ENCODE measurements at regions of chr1 and their contacts with region 1.

Region 1: GRCh38 chr1:222370081-222370912 is 177.6 kb downstream of the HHIPL2 start:
- DNase-seq: peak; percentile 97
- ATAC-seq: peak; percentile 56
- H3K4me3 ChIP-seq: no peak overlapping the region
- H3K27ac ChIP-seq: peak overlapping the region; percentile 99
- H3K4me1 ChIP-seq: peaks cover 30% of the 10 kb centered on the region
- H3K27me3 ChIP-seq: no peaks in the 10 kb centered on the region
- CTCF ChIP-seq: no peak
- POLR2A ChIP-seq: no peak
- RAD21 ChIP-seq: no peak; the same call in 1 of the 2 replicates

Region 2: DNA sequence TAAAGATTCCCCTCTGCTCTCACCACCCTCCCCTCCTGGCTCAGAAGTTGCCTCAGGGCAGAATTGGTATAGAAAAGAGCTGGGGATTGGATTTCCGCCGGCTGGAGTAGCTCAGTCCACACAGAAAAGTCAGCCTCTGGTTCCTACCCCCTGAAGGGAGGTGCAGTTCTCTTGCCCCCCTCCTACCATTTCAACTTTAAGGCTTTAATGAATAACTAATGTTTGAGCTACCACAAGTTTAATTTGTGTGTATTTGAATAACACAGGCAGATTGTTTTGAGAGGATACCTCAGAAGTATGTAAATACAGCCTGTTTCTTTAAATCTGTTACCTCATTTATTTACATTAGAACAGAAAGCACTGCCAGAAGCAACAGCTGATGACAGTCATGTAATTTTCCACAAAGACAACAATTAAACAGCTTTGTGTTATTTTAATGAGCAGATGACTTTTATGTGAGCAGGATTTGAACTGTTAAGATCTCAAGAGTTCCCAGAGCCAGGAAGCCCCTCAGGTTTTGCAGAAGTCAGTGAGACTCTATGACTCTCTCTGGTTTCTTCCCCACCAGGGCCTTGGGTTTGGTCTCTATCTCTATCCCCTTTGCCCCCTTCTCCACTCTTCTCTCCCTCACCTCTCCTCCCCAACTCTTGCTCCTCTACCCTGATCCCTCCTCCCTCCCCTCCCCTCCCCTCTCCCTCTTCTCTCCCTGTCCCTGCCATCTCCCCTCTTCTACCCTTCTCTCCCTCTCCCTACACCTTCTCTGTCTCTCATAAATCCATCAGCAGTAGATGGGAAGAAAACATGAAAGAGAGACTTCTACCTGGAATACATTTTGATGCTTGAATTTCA is 654.8 kb before region 1 on chr1:
- CTCF ChIA-PET with region 1: no interaction called
- POLR2A ChIA-PET with region 1: no interaction called
- dilution Hi-C with region 1: no loop called
- in situ Hi-C with region 1: no loop called
- intact Hi-C with region 1: loop called (anchors 5 kb)
- DNase-seq: peak; percentile 77
- ATAC-seq: peak; percentile 28
- H3K4me3 ChIP-seq: no peak overlapping the region
- H3K27ac ChIP-seq: peak overlapping the region; percentile 90
- H3K4me1 ChIP-seq: peaks cover 57% of the 10 kb centered on the region
- H3K27me3 ChIP-seq: no peaks in the 10 kb centered on the region
- CTCF ChIP-seq: no peak
- POLR2A ChIP-seq: no peak
- RAD21 ChIP-seq: no peak

Region 3: GRCh38 chr1:222073307-222073995 is 296.8 kb before region 1 on chr1:
- CTCF ChIA-PET with region 1: no interaction called
- POLR2A ChIA-PET with region 1: no interaction called
- dilution Hi-C with region 1: no loop called
- in situ Hi-C with region 1: no loop called
- intact Hi-C with region 1: no loop called
- DNase-seq: peak; percentile 84
- ATAC-seq: peak; percentile 89
- H3K4me3 ChIP-seq: no peak overlapping the region
- H3K27ac ChIP-seq: 0 out of 2 replicates have a peak overlapping the region, but pooled peaks have one; percentile 26
- H3K4me1 ChIP-seq: peaks cover 6% of the 10 kb centered on the region; the same call in 1 of the 2 replicates
- H3K27me3 ChIP-seq: no peaks in the 10 kb centered on the region
- CTCF ChIP-seq: no peak
- POLR2A ChIP-seq: no peak
- RAD21 ChIP-seq: peak; percentile 27; the same call in 1 of the 2 replicates

Region 4: DNA sequence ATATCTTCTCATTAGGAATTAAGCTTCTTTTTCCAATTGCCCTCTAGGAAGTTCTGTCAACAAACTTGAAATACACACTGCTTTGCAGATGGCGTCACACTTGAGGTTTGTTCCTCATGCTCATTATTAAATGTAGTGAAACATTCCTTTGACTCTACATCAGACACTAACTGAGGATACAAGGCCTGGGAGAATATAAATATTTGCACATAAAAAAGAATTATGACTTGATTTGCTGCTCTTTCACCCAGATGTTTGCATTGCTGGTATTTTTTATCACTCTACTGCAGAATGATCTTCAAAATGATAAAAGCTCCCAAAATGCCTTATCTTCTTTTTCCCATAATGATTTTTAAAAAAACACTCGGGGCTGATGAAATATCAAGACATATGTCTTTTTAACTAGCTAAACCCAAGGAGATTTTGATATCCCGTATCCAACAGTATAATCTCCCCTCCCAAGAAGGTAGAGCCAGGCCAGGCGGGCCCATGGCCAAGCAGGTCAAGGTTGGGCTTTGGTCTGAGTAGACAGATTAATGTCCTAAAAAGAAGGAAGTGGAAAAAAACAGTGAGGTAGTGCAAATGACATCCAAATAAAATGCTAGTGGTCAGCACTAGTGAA is 87.0 kb before region 1 on chr1:
- CTCF ChIA-PET with region 1: no interaction called
- POLR2A ChIA-PET with region 1: no interaction called
- dilution Hi-C with region 1: no loop called
- in situ Hi-C with region 1: no loop called
- intact Hi-C with region 1: loop called (anchors 1 kb)
- DNase-seq: peak; percentile 99
- ATAC-seq: peak; percentile 91
- H3K4me3 ChIP-seq: no peak overlapping the region
- H3K27ac ChIP-seq: peak overlapping the region; percentile 94
- H3K4me1 ChIP-seq: peaks cover 19% of the 10 kb centered on the region
- H3K27me3 ChIP-seq: no peaks in the 10 kb centered on the region
- CTCF ChIP-seq: 0 out of 2 replicates have a peak, but pooled peaks have one; percentile 0
- POLR2A ChIP-seq: no peak
- RAD21 ChIP-seq: no peak

Region 5: DNA sequence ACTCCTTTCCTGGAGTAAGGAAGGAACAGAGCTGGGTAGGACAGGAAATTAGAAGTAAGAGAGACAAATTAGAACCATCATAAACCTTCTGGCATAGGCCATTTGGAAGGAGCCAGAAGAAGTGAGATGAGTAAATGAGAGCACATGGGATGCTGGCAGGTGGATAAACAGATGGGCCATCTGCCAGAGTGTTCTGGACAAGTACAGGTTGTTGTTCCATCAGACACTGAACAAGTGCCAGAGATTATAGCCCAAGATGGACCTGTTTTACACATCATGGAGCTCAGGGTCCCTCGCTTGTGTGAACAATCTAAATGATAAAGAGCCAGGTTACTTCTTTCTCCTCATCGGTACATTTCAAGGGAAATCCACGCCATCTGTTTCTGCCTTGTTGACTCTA is 22.7 kb before region 1 on chr1:
- CTCF ChIA-PET with region 1: no interaction called
- POLR2A ChIA-PET with region 1: no interaction called
- dilution Hi-C with region 1: no loop called
- in situ Hi-C with region 1: no loop called
- intact Hi-C with region 1: no loop called
- DNase-seq: no peak
- ATAC-seq: no peak
- H3K4me3 ChIP-seq: no peak overlapping the region
- H3K27ac ChIP-seq: no peak overlapping the region
- H3K4me1 ChIP-seq: no peaks in the 10 kb centered on the region
- H3K27me3 ChIP-seq: no peaks in the 10 kb centered on the region
- CTCF ChIP-seq: no peak
- POLR2A ChIP-seq: no peak
- RAD21 ChIP-seq: no peak

Region 6: DNA sequence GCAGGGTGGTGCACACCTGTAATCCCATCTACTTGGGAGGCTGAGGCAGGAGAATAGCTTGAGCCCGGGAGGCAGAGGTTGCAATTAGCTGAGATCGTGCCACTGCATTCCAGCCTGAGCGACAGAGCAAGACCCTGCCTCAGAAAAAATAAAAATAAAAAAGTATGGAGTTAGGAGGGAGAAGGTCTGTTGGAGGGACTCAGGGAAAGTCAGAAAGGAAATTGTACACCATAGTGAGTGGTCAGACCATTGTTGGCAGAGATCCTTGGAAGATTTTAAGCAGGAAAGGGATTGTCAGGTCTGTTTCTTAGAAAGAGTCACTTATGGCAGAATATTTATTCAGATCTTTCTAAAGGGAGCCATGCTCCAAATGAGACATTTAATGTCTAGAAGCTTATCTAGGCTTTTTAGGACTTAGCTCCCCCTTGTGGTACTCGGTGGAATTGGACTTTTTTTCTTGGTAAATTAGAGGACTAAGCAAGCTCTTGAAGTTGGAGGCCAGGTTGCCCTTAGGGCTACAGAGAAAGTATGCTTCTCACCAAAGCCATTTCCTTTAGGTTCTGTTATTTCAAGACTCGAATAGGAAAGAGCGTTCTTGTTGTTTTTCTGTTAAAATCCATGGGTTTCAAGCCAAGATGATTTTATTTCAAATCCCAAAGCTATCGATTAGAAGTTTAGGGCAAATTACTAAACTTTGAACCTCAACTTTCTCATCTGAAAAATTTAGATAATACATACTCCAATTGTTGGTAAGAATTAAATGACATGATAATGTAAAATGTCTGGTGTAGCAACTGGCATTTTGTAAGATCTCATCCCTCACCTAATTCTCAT is 264.1 kb after region 1 on chr1:
- CTCF ChIA-PET with region 1: no interaction called
- POLR2A ChIA-PET with region 1: no interaction called
- dilution Hi-C with region 1: no loop called
- in situ Hi-C with region 1: loop called (anchors 10 kb)
- intact Hi-C with region 1: no loop called
- DNase-seq: peak; percentile 90
- ATAC-seq: peak; percentile 82
- H3K4me3 ChIP-seq: no peak overlapping the region
- H3K27ac ChIP-seq: no peak overlapping the region
- H3K4me1 ChIP-seq: peaks cover 7% of the 10 kb centered on the region; the same call in 1 of the 2 replicates
- H3K27me3 ChIP-seq: no peaks in the 10 kb centered on the region
- CTCF ChIP-seq: peak; percentile 90
- POLR2A ChIP-seq: no peak
- RAD21 ChIP-seq: peak; percentile 83

Measured in IMR-90 (cell line).